G401 (cell line): ENCODE measurements at regions of chr1 and their contacts with region 1.

Region 1: GRCh38 chr1:205711104-205712020 is 31.1 kb upstream of the SLC45A3 start:
- DNase-seq: peak; percentile 87

Region 2: GRCh38 chr1:205591522-205592351 is 119.6 kb before region 1 on chr1:
- in situ Hi-C with region 1: loop called (anchors 25 kb)
- DNase-seq: peak; percentile 82

Region 3: GRCh38 chr1:205933671-205934618 is 222.6 kb after region 1 on chr1:
- in situ Hi-C with region 1: no loop called
- DNase-seq: peak; percentile 4